Tibial artery (tissue), 4 donors: ENCODE measurements at regions of chr17 and their contacts with region 1.

Region 1: GRCh38 chr17:75673487-75673886 is 6.3 kb downstream of the SAP30BP start:
- DNase-seq: no peak
- H3K4me3 ChIP-seq: no peak overlapping the region
- H3K27ac ChIP-seq: no peak overlapping the region
- H3K4me1 ChIP-seq: peaks cover 0 to 26% (median 6%) of the 10 kb centered on the region in 4 donors
- H3K27me3 ChIP-seq: no peaks in the 10 kb centered on the region
- CTCF ChIP-seq: no peak

Region 2: DNA sequence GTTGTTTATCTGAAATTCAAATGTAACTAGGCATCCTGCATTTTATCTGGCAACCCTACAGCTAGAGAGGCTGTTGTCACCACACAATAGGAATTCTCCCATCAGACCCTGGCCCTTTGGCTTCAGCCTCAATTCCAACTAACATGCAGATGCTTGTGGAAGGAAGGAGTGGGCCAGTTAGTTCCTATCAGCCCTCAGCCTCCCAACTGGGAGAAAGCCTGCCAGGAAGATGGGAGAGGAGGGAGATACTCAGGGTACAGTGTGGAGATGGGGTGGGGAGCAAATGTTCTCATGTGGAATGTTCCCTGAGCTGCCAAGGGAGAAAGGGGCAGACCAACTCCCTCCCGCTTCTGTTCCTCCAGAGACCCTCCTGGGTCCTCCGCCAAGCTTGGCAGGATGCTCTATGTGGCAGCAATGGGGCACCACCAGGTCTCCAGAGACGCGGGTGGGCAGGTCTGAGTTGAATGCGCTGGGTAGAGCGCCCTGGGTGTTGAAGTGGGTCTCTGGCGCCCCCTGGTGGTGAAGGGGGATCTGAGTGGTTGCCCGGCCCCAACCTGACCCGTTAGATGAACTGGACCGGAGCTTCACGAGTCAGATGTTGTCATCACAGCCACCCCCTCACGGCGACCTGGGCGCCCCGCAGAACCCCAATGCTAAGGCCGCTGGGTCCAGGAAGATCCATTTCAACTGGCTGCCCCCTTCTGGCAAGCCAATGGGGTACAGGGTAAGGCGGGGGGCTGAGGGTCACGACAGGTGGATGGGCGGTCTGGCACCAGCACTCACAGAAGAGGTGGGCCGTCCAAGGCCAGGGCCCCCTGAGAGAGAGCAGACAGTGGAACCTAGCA is 76.3 kb after region 1 on chr17:
- intact Hi-C with region 1: loop called (anchors 5 kb)
- DNase-seq: peak; percentile 87 to 91
- H3K4me3 ChIP-seq: peak overlapping the region in 1 of 2 donors; percentile 27
- H3K27ac ChIP-seq: peak overlapping the region; percentile 21 to 51
- H3K4me1 ChIP-seq: peaks cover 0 to 31% (median 22%) of the 10 kb centered on the region in 4 donors
- H3K27me3 ChIP-seq: no peaks in the 10 kb centered on the region
- CTCF ChIP-seq: peak; percentile 91 to 92